ENCODE measurements at regions of chr4 and their contacts with region 1.

Region 1: GRCh38 chr4:124262211-124263179 is 450.0 kb downstream of the ANKRD50 start:
- DNase-seq: peak in 1 of 2 donors; percentile 73
- ATAC-seq: peak; percentile 75 to 90 (median 84)
- H3K4me3 ChIP-seq: no peak overlapping the region
- H3K27ac ChIP-seq: peak overlapping the region in 1 of 10 donors; percentile 29
- H3K4me1 ChIP-seq: peaks cover 0 to 6% (median 0%) of the 10 kb centered on the region in 9 donors
- H3K27me3 ChIP-seq: no peaks in the 10 kb centered on the region
- CTCF ChIP-seq: peak; percentile 71 to 94 (median 85)

Region 2: DNA sequence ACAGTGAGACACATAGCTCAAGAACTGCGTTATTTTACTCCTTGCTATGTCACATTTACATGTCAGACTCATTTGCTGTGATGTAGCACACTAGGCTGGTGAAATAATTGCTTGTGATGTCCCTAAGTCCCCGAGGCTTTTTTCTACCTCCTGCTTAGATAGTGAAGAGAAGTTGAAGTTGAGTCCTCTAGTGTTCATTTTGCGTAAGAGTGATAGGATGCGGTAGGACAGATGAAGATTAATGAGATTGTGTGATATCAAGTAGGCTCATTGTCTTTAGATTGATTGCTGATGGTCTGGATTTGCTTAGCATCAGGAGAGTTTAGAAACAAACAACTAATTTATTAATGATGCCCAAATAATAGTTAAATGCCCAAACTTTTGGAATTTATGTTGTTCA is 1166.5 kb before region 1 on chr4:
- intact Hi-C with region 1: loop called in 9 of 10 experiments (anchors 5 to 10 kb)
- DNase-seq: no peak
- ATAC-seq: no peak
- H3K4me3 ChIP-seq: no peak overlapping the region
- H3K27ac ChIP-seq: no peak overlapping the region
- H3K4me1 ChIP-seq: no peaks in the 10 kb centered on the region
- H3K27me3 ChIP-seq: no peaks in the 10 kb centered on the region
- CTCF ChIP-seq: no peak

Region 3: DNA sequence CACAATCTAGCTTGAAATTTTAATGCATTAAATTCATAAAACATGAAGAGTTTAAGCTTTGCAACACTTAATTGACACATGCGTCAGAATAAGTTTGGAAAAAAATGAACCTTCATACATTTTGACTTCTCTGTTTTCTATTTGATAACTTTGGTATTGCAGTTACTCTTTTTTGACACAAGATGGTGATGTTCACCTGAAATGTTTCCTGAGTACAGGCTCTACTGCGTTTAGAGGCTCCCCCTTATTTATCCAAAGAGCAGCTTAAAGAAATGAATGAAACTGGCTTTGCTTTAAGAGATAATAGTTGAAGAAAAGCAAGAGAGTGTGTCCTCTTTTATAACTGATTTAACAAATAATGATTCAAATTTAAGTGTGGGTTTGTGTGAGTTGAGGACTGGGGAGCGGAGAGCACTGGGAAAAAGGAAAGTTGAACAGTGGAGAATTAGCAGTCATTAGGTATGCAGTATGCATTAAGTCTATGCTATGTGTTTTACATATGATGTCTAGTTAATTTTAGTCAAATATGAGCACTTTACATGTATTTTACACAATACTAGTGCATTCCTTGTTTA is 1159.5 kb before region 1 on chr4:
- intact Hi-C with region 1: loop called (anchors 2 to 10 kb)
- DNase-seq: no peak
- ATAC-seq: peak in 6 of 8 donors; percentile 58 to 78 (median 72)
- H3K4me3 ChIP-seq: no peak overlapping the region
- H3K27ac ChIP-seq: peak overlapping the region in 1 of 10 donors; percentile 16
- H3K4me1 ChIP-seq: peaks cover 0 to 15% (median 4%) of the 10 kb centered on the region in 9 donors
- H3K27me3 ChIP-seq: no peaks in the 10 kb centered on the region
- CTCF ChIP-seq: peak; percentile 44 to 86 (median 78)

Region 4: GRCh38 chr4:123116412-123116811 is 1146.1 kb before region 1 on chr4:
- intact Hi-C with region 1: loop called in 1 of 10 experiments (anchors 5 kb)
- DNase-seq: no peak
- ATAC-seq: no peak
- H3K4me3 ChIP-seq: no peak overlapping the region
- H3K27ac ChIP-seq: no peak overlapping the region
- H3K4me1 ChIP-seq: peaks cover 0 to 7% (median 0%) of the 10 kb centered on the region in 9 donors
- H3K27me3 ChIP-seq: no peaks in the 10 kb centered on the region
- CTCF ChIP-seq: no peak

Region 5: DNA sequence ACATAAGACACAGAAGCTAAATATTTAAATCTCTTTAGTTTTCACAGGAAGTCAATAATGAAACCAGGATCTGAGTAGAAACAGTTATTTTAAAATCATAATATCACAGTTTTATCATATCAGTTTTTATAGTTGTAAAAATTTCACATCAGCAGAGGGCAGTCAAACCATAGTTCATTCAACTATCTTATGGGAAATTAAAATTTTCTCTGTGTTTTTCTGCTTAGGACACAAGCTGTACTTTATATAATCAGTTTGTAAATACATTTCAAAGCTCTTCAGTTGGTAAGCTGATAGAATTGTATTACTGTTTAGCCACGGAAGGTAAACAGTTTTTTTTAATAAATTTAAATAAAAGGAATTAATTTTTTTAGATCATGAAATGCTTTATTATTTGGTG is 1135.3 kb before region 1 on chr4:
- intact Hi-C with region 1: loop called in 1 of 10 experiments (anchors 5 kb)
- DNase-seq: no peak
- ATAC-seq: peak in 3 of 8 donors; percentile 46 to 55 (median 49)
- H3K4me3 ChIP-seq: no peak overlapping the region
- H3K27ac ChIP-seq: peak overlapping the region in 4 of 10 donors; percentile 28 to 36 (median 33)
- H3K4me1 ChIP-seq: peaks cover 0 to 25% (median 4%) of the 10 kb centered on the region in 9 donors
- H3K27me3 ChIP-seq: no peaks in the 10 kb centered on the region
- CTCF ChIP-seq: peak in 8 of 9 donors; percentile 31 to 69 (median 50)

Region 6: DNA sequence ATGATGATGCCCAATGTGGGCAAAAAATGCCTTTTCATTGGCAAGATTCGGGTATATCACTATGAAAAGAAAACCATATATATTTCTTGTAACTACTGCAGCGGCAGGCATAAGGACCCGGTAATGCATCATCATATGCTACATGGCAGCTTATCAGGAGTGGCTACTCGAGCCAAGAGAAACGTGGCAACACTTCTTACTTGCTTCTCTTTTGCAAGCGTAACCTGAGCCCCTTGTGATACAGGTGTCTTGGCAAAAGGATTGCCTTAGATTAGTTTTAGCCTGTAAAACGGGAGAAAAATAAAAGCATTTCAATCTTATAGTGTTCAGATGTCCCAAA is 585.6 kb before region 1 on chr4:
- intact Hi-C with region 1: loop called in 1 of 10 experiments (anchors 5 kb)
- DNase-seq: no peak
- ATAC-seq: no peak
- H3K4me3 ChIP-seq: no peak overlapping the region
- H3K27ac ChIP-seq: no peak overlapping the region
- H3K4me1 ChIP-seq: peaks cover 0 to 6% (median 0%) of the 10 kb centered on the region in 9 donors
- H3K27me3 ChIP-seq: no peaks in the 10 kb centered on the region
- CTCF ChIP-seq: no peak

Region 7: GRCh38 chr4:123770884-123771283 is 491.6 kb before region 1 on chr4:
- intact Hi-C with region 1: loop called in 2 of 10 experiments (anchors 5 kb)
- DNase-seq: no peak
- ATAC-seq: no peak
- H3K4me3 ChIP-seq: no peak overlapping the region
- H3K27ac ChIP-seq: no peak overlapping the region
- H3K4me1 ChIP-seq: no peaks in the 10 kb centered on the region
- H3K27me3 ChIP-seq: no peaks in the 10 kb centered on the region
- CTCF ChIP-seq: no peak

Region 8: DNA sequence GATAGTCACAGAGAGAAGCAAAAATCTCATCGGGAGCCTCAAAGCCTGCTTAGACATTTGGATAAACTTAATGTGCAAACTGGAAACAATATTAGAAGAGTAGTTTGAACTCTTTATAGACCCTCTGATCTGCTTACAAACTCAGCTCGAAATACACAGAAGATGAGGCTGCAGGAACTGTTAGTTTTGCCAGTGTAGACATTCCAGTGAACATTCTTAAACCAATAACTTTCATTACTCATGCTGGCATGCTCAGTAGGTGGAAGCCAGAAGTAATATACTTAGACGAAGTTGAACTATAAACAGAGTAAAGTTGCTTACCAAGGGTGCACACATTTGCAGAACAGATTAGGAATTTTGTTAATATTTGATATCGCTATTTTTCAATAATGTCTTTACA is 146.5 kb after region 1 on chr4:
- intact Hi-C with region 1: no loop called
- DNase-seq: no peak
- ATAC-seq: no peak
- H3K4me3 ChIP-seq: no peak overlapping the region
- H3K27ac ChIP-seq: no peak overlapping the region
- H3K4me1 ChIP-seq: no peaks in the 10 kb centered on the region
- H3K27me3 ChIP-seq: no peaks in the 10 kb centered on the region
- CTCF ChIP-seq: no peak